B cell (primary cell): ENCODE measurements at regions of chr16 and their contacts with region 1.

Region 1: DNA sequence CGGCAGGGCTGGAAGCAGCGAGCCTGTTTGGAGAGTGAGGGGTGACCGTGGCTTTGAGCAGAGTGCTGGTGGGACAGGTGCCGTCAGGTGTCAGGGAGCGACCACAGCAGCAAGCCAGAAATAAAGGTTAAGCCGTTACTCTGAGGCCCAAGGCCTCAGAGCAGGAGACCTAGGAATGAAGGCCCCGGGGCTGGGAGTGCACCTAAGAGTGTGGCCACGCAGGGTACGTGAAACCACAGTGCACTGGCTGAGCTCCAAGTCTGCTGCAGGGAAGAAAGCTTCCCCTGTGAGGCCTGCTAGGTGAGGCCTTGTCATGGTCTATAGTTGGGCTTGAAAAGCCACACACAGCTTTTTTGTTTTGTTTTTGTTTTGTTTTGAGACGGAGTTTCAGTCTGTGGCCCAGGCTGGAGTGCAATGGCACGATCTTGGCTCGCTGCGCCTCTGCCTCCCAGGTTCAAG is 8.7 kb downstream of the CLUAP1 start:
- DNase-seq: no peak
- ATAC-seq: no peak
- H3K4me3 ChIP-seq: no peak overlapping the region
- H3K4me3 Mint-ChIP-seq: no peak overlapping the region
- H3K27ac ChIP-seq: no peak overlapping the region
- H3K27ac Mint-ChIP-seq: no peak overlapping the region
- H3K4me1 ChIP-seq: no peaks in the 10 kb centered on the region
- H3K4me1 Mint-ChIP-seq: no peaks in the 10 kb centered on the region
- H3K27me3 ChIP-seq: no peaks in the 10 kb centered on the region
- H3K27me3 Mint-ChIP-seq: no peaks in the 10 kb centered on the region
- CTCF ChIP-seq: no peak

Region 2: GRCh38 chr16:3383045-3383448 is 126.5 kb before region 1 on chr16:
- CTCF ChIA-PET with region 1: no interaction called
- POLR2A ChIA-PET with region 1: interaction called, 10 read pairs
- intact Hi-C with region 1: no loop called
- DNase-seq: no peak
- ATAC-seq: no peak
- H3K4me3 ChIP-seq: no peak overlapping the region
- H3K4me3 Mint-ChIP-seq: no peak overlapping the region
- H3K27ac ChIP-seq: no peak overlapping the region
- H3K27ac Mint-ChIP-seq: no peak overlapping the region
- H3K4me1 ChIP-seq: no peaks in the 10 kb centered on the region
- H3K4me1 Mint-ChIP-seq: no peaks in the 10 kb centered on the region
- H3K27me3 ChIP-seq: no peaks in the 10 kb centered on the region
- H3K27me3 Mint-ChIP-seq: no peaks in the 10 kb centered on the region
- CTCF ChIP-seq: no peak

Region 3: GRCh38 chr16:3490911-3491629 is 18.4 kb before region 1 on chr16:
- CTCF ChIA-PET with region 1: no interaction called
- POLR2A ChIA-PET with region 1: no interaction called
- intact Hi-C with region 1: no loop called
- DNase-seq: no peak
- ATAC-seq: no peak
- H3K4me3 ChIP-seq: no peak overlapping the region
- H3K4me3 Mint-ChIP-seq: no peak overlapping the region
- H3K27ac ChIP-seq: no peak overlapping the region
- H3K27ac Mint-ChIP-seq: no peak overlapping the region
- H3K4me1 ChIP-seq: no peaks in the 10 kb centered on the region
- H3K4me1 Mint-ChIP-seq: no peaks in the 10 kb centered on the region
- H3K27me3 ChIP-seq: no peaks in the 10 kb centered on the region
- H3K27me3 Mint-ChIP-seq: no peaks in the 10 kb centered on the region
- CTCF ChIP-seq: no peak